H1 (cell line): ENCODE measurements at regions of chr12 and their contacts with region 1.

Region 1: GRCh38 chr12:6873094-6874014 is at the start of gene SPSB2:
- DNase-seq: peak; percentile 99 to 100
- H3K4me3 ChIP-seq: peak within 1 kb of the TSS; percentile 82 to 95 (median 87)
- H3K27ac ChIP-seq: peak within 1 kb of the TSS; percentile 61
- H3K4me1 ChIP-seq: peaks cover 2 to 33% (median 14%) of the 10 kb centered on the region in 4 experiments
- H3K27me3 ChIP-seq: no peaks in the 10 kb centered on the region
- CTCF ChIP-seq: no peak
- EP300 ChIP-seq: peak in 1 of 2 experiments; percentile 52; a peak in 1 of 3 replicates
- POLR2A ChIP-seq: no peak
- RAD21 ChIP-seq: peak in 1 of 2 experiments; percentile 9; a peak in 1 of 4 replicates
- total RNA-seq, gene SPSB2: 13.0 and 13.9 TPM in 2 replicates

Region 2: DNA sequence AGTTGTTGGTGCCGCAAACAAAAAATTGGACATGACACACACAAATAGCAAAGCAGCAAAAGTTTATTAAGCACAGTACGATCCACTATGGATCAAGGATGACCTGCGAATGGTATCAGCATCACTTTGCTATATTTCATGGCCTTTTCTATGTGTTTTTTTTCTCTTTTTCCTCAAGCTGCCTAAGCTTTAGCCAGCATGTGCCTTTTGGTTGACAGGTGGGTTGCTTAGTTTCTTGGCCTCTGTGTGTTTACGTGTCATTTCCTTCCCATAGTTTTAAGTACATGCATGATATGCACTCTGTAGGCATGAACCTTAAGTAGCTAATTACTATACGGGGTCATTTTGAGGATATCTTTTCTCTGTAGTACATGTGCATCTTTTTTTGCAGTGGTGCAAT is 74.2 kb before region 1 on chr12:
- CTCF ChIA-PET with region 1: no interaction called
- POLR2A ChIA-PET with region 1: no interaction called
- DNase-seq: no peak
- H3K4me3 ChIP-seq: no peak overlapping the region
- H3K27ac ChIP-seq: no peak overlapping the region
- H3K4me1 ChIP-seq: no peaks in the 10 kb centered on the region; a peak in 1 of 7 replicates
- H3K27me3 ChIP-seq: 0 out of 7 replicates have a peak, but pooled peaks cover 0 to 3% (median 0%) of the 10 kb centered on the region in 4 experiments
- CTCF ChIP-seq: no peak
- EP300 ChIP-seq: no peak
- POLR2A ChIP-seq: no peak
- RAD21 ChIP-seq: no peak

Region 3: DNA sequence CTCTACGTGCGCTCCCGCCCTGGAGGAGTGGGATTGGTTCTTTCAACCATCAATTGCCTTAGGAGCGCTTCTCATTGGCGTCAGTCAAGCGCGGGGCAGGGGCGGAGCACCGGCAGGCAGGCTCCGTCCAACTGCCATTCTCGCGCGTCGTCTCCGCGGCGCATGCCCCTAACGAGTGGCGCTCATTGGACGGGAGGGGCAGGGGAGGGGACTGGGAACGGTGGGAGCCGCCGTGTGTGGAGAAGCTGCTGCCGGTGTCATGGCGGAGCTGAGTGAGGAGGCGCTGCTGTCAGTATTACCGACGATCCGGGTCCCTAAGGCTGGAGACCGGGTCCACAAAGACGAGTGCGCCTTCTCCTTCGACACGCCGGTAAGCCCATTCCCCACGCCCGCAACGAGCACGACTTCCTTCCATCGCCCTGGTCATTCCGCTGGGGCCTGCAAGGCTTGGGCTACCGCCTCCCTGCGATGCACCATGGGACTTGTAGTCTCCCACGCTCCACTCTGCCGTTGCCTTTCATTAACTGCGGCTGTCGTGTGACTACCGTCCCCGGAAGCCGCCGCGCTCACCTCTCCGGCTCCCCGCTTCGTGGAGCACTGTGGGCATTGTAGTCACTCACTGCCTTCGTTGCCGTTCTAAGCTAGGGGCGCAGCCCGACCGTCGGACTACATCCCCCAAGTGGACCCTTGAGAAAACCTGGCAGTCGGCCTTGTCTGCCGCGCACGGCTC is 21.3 kb before region 1 on chr12 and contains the start of gene USP5:
- CTCF ChIA-PET with region 1: interaction called, 18 read pairs
- POLR2A ChIA-PET with region 1: interaction called, 588 read pairs
- DNase-seq: peak; percentile 94 to 99
- H3K4me3 ChIP-seq: peak within 1 kb of the TSS; percentile 79 to 94 (median 88)
- H3K27ac ChIP-seq: peak within 1 kb of the TSS; percentile 77; the same call in 1 of the 2 replicates
- H3K4me1 ChIP-seq: peaks cover 0 to 14% (median 3%) of the 10 kb centered on the region in 4 experiments; a peak in 5 of 7 replicates
- H3K27me3 ChIP-seq: no peaks in the 10 kb centered on the region
- CTCF ChIP-seq: no peak
- EP300 ChIP-seq: no peak
- POLR2A ChIP-seq: peak in 1 of 2 experiments; percentile 79; a peak in 2 of 3 replicates
- RAD21 ChIP-seq: no peak
- total RNA-seq, gene USP5: 148 and 159 TPM in 2 replicates

Region 4: DNA sequence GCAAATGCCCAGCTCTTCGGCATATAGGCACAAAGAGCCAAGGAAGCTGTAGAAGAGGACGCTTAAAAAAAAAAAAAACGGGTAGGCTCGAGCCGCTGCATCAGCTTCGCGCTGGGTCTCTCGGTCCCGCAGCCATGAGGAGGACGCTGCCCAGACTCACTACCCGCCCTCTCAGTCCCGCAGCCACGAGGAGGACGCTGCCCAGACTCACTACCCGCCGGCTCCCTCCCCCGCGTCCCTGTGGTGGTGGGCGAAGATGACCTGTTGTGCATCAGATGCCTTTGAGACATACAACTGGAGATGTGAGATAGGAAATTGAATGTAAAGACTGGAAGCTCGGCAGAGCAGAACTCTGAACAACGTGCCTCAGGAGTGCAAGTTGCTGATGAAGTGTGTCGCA is 11.2 kb after region 1 on chr12:
- CTCF ChIA-PET with region 1: interaction called, 18 read pairs
- POLR2A ChIA-PET with region 1: interaction called, 86 read pairs
- DNase-seq: no peak
- H3K4me3 ChIP-seq: no peak overlapping the region
- H3K27ac ChIP-seq: no peak overlapping the region
- H3K4me1 ChIP-seq: peaks cover 2 to 10% (median 5%) of the 10 kb centered on the region in 4 experiments; a peak in 5 of 7 replicates
- H3K27me3 ChIP-seq: no peaks in the 10 kb centered on the region
- CTCF ChIP-seq: no peak
- EP300 ChIP-seq: no peak
- POLR2A ChIP-seq: no peak
- RAD21 ChIP-seq: no peak

Region 5: DNA sequence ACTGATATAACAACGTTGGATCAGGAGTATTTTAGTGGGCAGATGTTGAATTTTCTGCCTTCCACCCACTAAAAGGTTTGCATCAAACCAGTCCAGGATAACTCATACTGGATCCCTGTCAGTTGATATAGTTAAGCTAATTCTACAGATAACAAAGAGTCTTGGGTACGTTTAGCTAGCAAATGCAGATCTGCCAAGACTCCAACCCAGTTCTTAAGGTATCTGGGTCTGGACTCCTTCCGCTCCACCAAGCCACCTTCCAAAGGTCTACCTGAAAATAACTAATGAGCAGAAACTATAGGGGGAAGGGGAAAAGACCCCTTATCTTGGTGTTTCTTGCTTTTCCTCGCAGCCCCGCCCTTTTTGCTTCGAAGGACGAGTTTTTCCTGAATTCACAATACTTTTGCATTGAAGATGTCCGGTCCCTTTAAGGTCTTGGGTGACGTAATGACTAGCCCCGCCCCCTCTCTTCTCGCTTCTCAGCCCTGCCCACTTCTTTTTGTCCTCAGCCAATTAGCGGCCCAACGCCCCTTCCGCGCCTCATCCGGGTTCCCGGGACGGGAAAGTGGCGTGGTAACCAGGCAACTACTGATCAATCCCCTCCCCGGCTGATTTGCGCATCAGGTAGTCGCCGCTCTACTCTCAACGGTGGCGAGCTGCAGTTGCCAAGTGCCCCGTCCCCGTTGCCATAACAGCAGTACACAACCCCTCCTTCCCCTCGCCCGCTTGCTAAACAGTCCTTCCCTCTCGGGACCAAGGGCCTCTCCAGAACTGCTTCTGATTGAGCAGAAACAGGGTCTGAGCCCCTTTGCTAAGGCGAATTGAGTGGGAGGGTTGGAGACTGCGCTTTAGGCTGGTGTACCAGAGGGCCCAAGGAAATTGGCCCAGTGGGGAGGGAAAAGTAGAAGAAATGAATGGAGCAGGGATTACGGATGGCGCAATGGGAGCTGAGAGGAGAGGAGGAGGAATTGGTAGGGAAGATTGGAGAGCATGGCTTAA is 31.2 kb after region 1 on chr12 and contains the start of gene LRRC23:
- CTCF ChIA-PET with region 1: interaction called, 18 read pairs
- POLR2A ChIA-PET with region 1: interaction called, 264 read pairs
- DNase-seq: peak; percentile 96 to 98
- H3K4me3 ChIP-seq: peak within 1 kb of the TSS; percentile 46 to 64 (median 52)
- H3K27ac ChIP-seq: peak within 1 kb of the TSS; percentile 76
- H3K4me1 ChIP-seq: peaks cover 3 to 12% (median 11%) of the 10 kb centered on the region in 4 experiments; a peak in 5 of 7 replicates
- H3K27me3 ChIP-seq: peaks cover 0 to 4% (median 0%) of the 10 kb centered on the region in 4 experiments; a peak in 4 of 7 replicates
- CTCF ChIP-seq: no peak
- EP300 ChIP-seq: peak in 1 of 2 experiments; percentile 72; a peak in 1 of 3 replicates
- POLR2A ChIP-seq: peak in 1 of 2 experiments; percentile 76; a peak in 1 of 3 replicates
- RAD21 ChIP-seq: no peak
- total RNA-seq, gene LRRC23: 2.5 and 2.9 TPM in 2 replicates

Region 6: DNA sequence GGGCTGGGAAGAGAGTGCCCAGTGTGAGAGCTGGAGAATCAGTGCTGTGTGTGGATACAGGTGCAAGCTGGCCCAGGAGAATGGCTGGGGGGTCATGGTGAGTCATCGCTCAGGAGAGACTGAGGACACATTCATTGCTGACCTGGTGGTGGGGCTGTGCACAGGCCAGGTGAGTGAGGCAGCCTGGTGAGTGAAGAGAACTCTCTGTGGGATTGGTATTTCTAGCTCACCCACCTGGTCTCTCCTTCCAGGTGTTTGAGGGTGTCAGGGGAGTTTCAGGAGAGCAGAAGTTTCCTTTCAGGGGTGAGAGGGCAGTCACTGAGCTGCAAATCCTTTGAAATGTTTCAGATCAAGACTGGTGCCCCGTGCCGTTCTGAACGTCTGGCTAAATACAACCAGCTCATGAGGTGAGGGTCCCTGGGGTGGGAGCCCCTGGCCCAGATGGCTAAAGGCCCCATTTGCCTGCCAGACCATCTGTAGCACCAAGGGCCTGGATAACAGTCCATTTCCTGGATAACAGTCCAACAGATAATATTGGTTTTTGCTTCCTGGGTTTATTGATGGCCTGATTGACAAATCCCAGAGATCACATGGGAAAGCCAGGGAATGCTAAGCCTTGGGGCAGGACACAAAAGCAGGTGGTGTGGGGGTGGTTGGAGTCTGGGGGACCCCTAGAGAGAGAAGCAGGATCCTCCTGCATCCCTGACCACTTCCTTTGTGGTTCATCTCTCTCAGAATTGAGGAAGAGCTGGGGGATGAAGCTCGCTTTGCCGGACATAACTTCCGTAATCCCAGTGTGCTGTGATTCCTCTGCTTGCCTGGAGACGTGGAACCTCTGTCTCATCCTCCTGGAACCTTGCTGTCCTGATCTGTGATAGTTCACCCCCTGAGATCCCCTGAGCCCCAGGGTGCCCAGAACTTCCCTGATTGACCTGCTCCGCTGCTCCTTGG is 48.9 kb after region 1 on chr12:
- CTCF ChIA-PET with region 1: interaction called, 83 read pairs
- POLR2A ChIA-PET with region 1: interaction called, 304 read pairs
- DNase-seq: no peak
- H3K4me3 ChIP-seq: no peak overlapping the region
- H3K27ac ChIP-seq: no peak overlapping the region
- H3K4me1 ChIP-seq: peaks cover 12 to 24% (median 16%) of the 10 kb centered on the region in 4 experiments
- H3K27me3 ChIP-seq: no peaks in the 10 kb centered on the region
- CTCF ChIP-seq: no peak
- EP300 ChIP-seq: no peak
- POLR2A ChIP-seq: no peak
- RAD21 ChIP-seq: no peak

Region 7: DNA sequence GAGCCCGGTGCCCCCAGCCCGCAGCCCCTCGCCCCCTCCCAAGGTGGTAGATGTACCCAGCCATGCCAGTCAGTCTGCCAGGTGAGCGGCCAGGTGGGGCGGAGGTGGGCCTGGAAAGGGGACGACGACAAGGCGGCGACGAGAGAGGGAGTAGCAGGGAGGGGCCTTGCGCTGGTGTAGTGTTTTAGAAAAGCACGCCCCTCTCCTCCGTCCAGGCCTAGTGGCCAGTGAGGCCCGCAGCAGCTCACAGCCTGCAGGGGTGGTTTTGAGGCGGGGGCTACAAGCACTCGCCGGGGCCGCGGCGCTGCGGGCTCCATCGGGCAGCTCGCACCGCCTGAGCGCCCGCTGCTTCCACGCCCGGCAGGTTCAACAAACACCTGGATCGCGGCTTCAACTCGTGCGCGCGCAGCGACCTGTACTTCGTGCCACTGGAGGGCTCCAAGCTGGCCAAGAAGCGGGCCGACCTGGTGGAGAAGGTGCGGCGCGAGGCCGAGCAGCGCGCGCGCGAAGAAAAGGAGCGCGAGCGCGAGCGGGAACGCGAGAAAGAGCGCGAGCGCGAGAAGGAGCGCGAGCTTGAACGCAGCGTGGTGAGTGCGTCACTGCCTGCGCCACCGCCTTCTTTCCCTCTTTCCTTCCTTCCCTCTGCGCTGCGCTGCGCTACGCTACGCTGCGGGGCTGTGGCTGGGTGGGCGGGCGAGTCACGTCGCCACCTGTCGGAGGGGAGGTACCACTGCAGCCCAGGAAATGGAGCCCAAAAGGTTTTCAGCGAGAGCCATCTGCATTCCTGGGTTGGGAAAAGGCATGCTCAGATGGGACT is 64.3 kb after region 1 on chr12:
- CTCF ChIA-PET with region 1: interaction called, 216 read pairs
- POLR2A ChIA-PET with region 1: interaction called, 442 read pairs
- DNase-seq: peak in 1 of 2 experiments; percentile 93
- H3K4me3 ChIP-seq: peak overlapping the region; percentile 42 to 69 (median 58)
- H3K27ac ChIP-seq: peak overlapping the region; percentile 90
- H3K4me1 ChIP-seq: peaks cover 0 to 13% (median 5%) of the 10 kb centered on the region in 4 experiments; a peak in 5 of 7 replicates
- H3K27me3 ChIP-seq: no peaks in the 10 kb centered on the region
- CTCF ChIP-seq: peak in 2 of 3 experiments; percentile 90 to 99; a peak in 3 of 4 replicates
- EP300 ChIP-seq: peak; percentile 56 to 63; a peak in 1 of 3 replicates
- POLR2A ChIP-seq: peak in 1 of 2 experiments; percentile 93; a peak in 2 of 3 replicates
- RAD21 ChIP-seq: peak; percentile 51 to 53; a peak in 3 of 4 replicates